Ascending aorta (tissue), 2 donors: ENCODE measurements at regions of chr15 and their contacts with region 1.

Region 1: GRCh38 chr15:48861813-48862431 is 16.0 kb upstream of the EID1 start:
- DNase-seq: no peak
- H3K4me3 ChIP-seq: no peak overlapping the region
- H3K27ac ChIP-seq: peak overlapping the region in 1 of 2 donors; percentile 26
- H3K4me1 ChIP-seq: no peaks in the 10 kb centered on the region
- H3K27me3 ChIP-seq: no peaks in the 10 kb centered on the region
- CTCF ChIP-seq: peak; percentile 78 to 94 (median 80)

Region 2: DNA sequence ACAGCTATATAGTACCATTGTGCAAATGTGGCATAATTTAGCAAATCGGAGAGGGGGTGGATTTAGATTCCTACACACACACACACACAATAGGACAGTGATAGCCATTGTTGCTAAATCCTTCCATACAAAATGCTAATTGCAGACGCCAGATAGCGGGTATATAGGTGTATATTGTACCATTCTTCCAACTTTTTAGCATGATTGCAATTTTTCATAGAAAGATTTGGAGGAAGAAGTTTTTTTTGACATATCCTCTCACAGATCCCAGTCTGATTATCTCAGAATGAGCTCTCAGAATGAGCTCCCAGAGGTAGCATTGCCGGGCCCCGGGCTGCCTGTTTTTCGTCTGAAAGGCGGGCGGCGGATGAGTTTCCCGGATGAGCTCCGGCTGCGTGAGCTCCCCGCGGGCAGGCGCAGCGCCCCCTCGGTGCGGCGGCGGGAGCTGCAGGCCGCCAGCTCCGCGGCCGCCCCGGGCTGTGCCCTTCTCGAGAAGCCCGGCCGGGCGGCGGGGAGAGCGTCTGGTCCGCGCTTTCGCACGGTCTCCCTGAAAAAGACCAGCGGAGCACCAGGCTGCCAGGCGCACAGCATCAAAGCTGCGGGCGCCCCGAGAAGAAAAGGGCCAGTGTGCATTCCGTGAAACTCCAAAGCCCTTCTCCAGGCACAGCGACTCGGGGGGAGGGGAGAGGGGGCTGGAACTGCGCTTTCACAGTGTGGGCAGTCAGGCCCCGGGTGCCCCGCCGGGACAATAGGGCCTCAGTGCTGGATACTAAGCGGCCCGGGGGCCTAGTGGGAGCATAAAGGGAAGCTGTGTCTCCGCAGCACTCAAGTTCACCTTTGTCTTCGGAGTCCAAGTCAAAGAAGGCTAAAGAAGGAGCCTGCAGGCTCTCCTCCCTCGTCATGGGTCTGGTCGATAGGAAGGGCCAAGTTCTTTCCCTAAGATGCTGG is 113.8 kb after region 1 on chr15:
- intact Hi-C with region 1: loop called (anchors 1 kb)
- DNase-seq: peak in 1 of 2 donors; percentile 87
- H3K4me3 ChIP-seq: peak overlapping the region; percentile 57 to 68
- H3K27ac ChIP-seq: peak overlapping the region; percentile 87 to 88
- H3K4me1 ChIP-seq: peaks cover 4% of the 10 kb centered on the region in 2 donors
- H3K27me3 ChIP-seq: no peaks in the 10 kb centered on the region
- CTCF ChIP-seq: peak; percentile 72 to 96 (median 91)

Region 3: DNA sequence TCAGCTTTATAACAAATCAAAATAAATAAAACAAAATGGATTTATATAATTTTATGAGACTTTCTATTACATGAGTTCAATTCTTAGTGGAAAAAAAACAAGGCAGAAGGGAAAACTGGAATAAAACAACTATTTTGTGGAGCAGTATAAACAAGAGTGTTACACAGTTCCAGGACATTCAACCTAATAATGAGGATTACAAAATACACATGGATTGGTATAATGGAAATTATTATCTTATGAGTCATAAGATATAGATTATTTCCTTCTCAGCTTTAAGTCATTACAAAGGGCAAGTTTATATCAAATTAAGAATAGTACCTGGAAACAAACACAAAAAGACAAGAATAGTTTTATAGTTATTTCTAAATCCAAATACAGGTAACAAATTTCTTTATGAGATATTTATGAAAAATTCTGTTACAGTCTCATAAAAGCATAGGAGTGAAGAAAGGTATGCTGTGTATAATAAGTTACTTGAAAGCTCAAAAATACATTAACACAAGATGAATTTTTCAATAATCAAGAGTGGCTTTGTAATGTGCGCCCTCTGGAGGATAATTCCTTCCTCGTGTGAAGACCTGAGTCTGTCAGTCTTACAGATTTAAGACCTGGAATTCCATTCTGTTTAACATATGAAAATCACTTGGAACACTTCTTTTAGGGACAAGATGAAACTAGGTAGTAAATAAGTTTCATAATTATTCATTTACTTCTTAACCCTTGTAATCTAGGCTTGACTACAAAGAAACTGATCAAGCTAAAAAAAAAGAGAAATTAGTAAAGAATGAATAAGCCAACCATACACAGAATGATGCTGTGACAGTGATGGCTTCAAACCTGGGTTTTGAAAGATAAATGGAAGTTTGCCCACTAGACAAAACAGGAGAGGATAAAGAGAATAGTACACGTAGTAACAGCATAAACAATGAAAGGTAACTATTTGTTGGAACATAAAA is 284.0 kb after region 1 on chr15:
- intact Hi-C with region 1: loop called (anchors 1 kb)
- DNase-seq: no peak
- H3K4me3 ChIP-seq: no peak overlapping the region
- H3K27ac ChIP-seq: no peak overlapping the region
- H3K4me1 ChIP-seq: peaks cover 0 to 14% of the 10 kb centered on the region in 2 donors
- H3K27me3 ChIP-seq: no peaks in the 10 kb centered on the region
- CTCF ChIP-seq: peak; percentile 22 to 73 (median 59)

Region 4: DNA sequence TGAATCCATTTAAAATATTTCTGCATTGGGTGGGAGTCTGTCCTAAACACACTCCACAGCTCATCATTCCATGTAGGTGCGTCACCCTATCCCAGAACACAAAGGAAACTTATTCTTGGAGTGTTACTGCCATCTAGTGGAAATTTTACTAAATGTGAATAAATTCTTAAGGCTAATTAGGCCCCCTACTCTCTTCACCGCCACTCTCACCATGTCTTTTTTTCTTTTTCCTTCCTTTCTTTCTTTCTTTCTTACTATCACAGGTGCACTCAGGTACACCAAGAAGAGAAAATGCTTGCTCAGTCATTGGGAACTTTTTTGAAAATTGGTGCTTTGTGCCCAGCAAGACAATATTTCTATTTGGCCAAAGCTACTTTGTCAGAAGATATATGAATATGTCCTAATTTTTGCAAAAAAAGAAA is 1283.5 kb after region 1 on chr15:
- intact Hi-C with region 1: loop called (anchors 2 kb)
- DNase-seq: no peak
- H3K4me3 ChIP-seq: no peak overlapping the region
- H3K27ac ChIP-seq: no peak overlapping the region
- H3K4me1 ChIP-seq: no peaks in the 10 kb centered on the region
- H3K27me3 ChIP-seq: no peaks in the 10 kb centered on the region
- CTCF ChIP-seq: peak; percentile 40 to 59 (median 48)